ENCODE measurements at regions of chr6 and their contacts with region 1.

Region 1: DNA sequence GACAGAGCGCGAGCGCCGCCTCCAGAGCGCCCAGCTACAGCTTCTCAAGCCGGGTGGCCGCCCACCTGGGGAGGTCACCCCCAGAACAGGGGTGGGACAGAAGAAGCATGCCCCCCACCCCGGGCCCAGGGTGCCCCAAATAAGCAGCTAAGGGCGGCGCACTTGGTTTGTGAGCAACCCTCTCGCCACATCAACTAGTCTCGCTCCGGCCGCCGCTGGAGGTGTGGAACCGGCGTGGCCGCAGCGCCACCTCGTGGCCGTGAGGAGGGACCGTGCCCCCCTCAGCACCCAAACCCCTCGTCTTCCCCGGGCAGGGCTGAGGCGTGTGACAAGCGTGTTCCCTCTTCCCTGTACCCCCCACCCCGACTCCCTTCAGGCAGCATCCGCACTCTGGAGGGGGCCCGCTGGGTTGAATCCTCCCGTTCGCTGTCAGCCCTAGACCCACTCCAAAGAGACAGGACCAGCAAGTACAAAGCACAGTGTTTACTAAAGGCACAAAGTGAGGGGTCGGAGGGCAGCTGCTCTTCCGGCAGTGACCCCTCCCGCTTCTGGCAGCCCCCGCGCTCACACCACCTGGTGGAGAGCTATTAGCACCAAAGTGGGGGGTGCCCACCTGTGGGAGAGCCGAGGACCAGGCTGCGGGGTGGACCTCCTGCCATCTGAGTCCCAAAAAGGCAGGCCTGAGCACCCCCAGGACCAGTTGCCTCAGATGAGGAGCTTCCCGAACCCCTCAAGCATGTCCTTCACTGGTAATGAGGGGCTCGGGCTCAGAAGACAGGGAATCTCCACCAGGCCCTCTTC is 45.4 kb downstream of the MDFI start:
- DNase-seq: peak; percentile 64
- H3K4me3 ChIP-seq: peak overlapping the region in 1 of 3 experiments; percentile 35
- H3K27ac ChIP-seq: no peak overlapping the region
- H3K4me1 ChIP-seq: peaks cover 8% of the 10 kb centered on the region
- H3K27me3 ChIP-seq: no peaks in the 10 kb centered on the region
- CTCF ChIP-seq: peak; percentile 88 to 97
- POLR2A ChIP-seq: no peak

Region 2: GRCh38 chr6:40460380-40460779 is 1223.3 kb before region 1 on chr6:
- CTCF ChIA-PET with region 1: no interaction called
- POLR2A ChIA-PET with region 1: no interaction called
- dilution Hi-C with region 1: no loop called
- intact Hi-C with region 1: no loop called
- DNase-seq: no peak
- H3K4me3 ChIP-seq: no peak overlapping the region
- H3K27ac ChIP-seq: no peak overlapping the region
- H3K4me1 ChIP-seq: no peaks in the 10 kb centered on the region
- H3K27me3 ChIP-seq: no peaks in the 10 kb centered on the region
- CTCF ChIP-seq: no peak
- POLR2A ChIP-seq: no peak

Region 3: DNA sequence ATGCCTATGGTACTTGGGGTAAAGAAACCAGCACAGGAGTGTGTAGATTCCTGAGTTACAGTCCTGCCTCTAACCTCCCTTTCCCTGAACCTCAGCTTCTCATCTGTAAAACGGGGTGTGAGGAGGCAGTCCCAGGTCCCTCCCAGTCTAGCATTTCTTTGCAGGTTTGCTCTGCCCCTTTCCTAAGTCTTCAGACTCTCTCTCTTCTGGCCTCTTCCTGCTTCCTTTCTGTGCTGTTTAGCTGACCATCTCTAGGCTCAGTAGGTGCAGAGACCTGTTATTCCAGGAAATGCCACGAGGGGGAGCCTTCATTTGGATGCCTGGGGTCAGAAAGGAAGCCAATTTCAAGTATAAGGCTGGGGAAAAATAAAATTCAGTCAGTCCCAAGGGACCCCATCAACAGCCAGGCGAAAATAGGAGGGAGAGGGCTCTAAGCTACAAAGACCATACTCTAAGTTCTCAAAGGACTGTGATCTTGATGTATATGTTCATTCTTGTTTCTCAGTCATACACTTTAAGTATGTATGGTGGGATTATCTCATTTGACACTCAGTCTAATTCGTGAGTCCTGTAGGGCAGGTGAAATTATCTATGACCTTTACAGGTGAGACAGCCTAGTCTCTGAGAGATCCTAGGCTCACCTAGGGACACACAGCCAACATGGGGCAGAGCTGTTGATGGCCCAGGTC is 259.2 kb before region 1 on chr6:
- CTCF ChIA-PET with region 1: interaction called, 35 read pairs
- POLR2A ChIA-PET with region 1: interaction called, 3 read pairs
- dilution Hi-C with region 1: no loop called
- intact Hi-C with region 1: loop called (anchors 1 kb)
- DNase-seq: peak; percentile 77
- H3K4me3 ChIP-seq: no peak overlapping the region
- H3K27ac ChIP-seq: no peak overlapping the region
- H3K4me1 ChIP-seq: no peaks in the 10 kb centered on the region
- H3K27me3 ChIP-seq: peaks cover 37 to 46% of the 10 kb centered on the region in 2 experiments
- CTCF ChIP-seq: peak; percentile 70 to 78
- POLR2A ChIP-seq: no peak

Region 4: DNA sequence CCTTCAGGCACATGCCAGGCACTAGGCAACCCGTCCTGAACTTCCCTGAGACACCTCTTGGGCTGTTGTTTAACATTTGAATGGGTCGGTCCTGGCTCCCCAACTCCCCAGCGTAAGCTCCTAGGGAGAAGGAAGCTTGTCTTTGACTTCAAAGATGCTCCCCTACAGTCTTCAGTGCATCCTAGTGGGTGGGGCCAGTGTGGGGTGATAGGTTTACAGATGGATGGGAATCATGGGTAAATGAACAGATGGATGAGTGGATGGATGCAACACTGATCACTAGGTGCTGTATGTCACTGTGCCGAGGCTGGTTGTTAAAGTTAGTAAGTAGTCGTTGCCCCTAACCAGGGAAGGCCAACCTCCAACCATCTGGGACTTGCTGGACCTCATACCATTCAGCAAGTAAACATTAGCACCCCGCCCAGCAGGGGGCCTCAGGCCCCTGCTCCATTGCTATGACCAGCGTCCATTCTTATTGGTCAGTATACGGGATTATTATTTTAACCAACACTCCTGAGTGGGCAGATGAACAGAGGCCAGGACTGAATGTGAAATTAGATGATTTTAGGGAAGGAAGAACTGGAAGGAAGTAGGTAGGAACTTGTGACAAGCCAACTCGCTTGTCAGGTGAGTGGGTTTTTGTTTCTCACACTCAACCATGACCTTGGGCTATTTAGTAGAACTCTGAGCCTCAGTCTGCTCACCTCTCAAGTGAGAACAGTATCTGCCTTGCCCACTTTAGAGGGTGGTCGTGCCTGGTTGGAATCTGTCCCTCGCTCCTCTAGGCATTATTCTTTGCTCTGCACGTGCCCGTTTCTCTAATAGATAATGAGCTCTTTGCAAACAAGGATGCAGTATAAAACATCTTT is 220.4 kb before region 1 on chr6:
- CTCF ChIA-PET with region 1: interaction called, 18 read pairs
- POLR2A ChIA-PET with region 1: no interaction called
- dilution Hi-C with region 1: no loop called
- intact Hi-C with region 1: loop called (anchors 1 kb)
- DNase-seq: peak; percentile 83
- H3K4me3 ChIP-seq: no peak overlapping the region
- H3K27ac ChIP-seq: no peak overlapping the region
- H3K4me1 ChIP-seq: no peaks in the 10 kb centered on the region
- H3K27me3 ChIP-seq: peaks cover 7% of the 10 kb centered on the region in 2 experiments
- CTCF ChIP-seq: peak; percentile 80 to 86
- POLR2A ChIP-seq: no peak

Region 5: GRCh38 chr6:41494212-41495110 is 189.2 kb before region 1 on chr6:
- CTCF ChIA-PET with region 1: no interaction called
- POLR2A ChIA-PET with region 1: no interaction called
- dilution Hi-C with region 1: no loop called
- intact Hi-C with region 1: no loop called
- DNase-seq: no peak
- H3K4me3 ChIP-seq: no peak overlapping the region
- H3K27ac ChIP-seq: no peak overlapping the region
- H3K4me1 ChIP-seq: no peaks in the 10 kb centered on the region
- H3K27me3 ChIP-seq: peaks cover 19 to 26% of the 10 kb centered on the region in 2 experiments
- CTCF ChIP-seq: no peak
- POLR2A ChIP-seq: no peak

Region 6: GRCh38 chr6:41591859-41592502 is 91.7 kb before region 1 on chr6:
- CTCF ChIA-PET with region 1: interaction called, 10 read pairs
- POLR2A ChIA-PET with region 1: no interaction called
- dilution Hi-C with region 1: no loop called
- intact Hi-C with region 1: loop called (anchors 2 kb)
- DNase-seq: peak; percentile 73
- H3K4me3 ChIP-seq: no peak overlapping the region
- H3K27ac ChIP-seq: no peak overlapping the region
- H3K4me1 ChIP-seq: no peaks in the 10 kb centered on the region
- H3K27me3 ChIP-seq: no peaks in the 10 kb centered on the region
- CTCF ChIP-seq: peak; percentile 89 to 93
- POLR2A ChIP-seq: no peak

Region 7: DNA sequence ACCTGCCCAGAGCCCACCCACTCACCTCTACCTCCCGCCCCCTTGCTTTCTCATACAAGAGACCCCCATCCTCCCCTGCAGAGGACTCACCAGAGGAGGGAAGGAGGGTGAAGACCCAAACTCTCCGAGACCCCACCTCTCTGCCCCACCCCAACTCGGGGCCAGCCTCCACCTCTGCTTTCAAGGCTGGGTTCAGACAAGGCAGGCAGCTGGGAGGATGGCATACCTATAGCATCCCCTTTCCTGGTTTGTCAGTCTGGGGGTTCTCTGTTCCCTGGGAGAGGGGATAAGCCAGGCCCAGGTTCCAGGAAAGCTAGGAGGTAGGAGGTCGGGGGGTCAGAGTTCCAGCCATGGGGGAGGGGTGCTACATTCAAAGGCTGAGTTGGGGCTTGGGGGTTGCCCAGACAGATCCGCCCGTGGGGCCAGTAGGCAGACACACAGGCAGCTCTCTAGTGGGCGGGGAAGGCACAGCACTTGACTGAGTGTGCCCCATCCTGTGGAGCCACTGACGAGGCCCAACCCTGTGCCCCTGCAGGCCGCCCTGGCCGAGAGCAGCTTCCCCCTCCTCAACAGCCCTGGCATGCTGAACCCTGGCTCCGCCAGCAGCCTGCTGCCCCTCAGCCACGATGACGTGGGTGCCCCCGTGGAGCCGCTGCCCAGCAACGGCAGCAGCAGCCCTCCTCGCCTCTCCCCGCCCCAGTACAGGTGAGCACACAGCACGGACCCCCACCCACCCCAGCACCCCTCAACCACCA is 86.3 kb before region 1 on chr6:
- CTCF ChIA-PET with region 1: interaction called, 226 read pairs
- POLR2A ChIA-PET with region 1: interaction called, 4 read pairs
- dilution Hi-C with region 1: no loop called
- intact Hi-C with region 1: loop called (anchors 2 kb)
- DNase-seq: no peak
- H3K4me3 ChIP-seq: no peak overlapping the region
- H3K27ac ChIP-seq: no peak overlapping the region
- H3K4me1 ChIP-seq: no peaks in the 10 kb centered on the region
- H3K27me3 ChIP-seq: no peaks in the 10 kb centered on the region
- CTCF ChIP-seq: no peak
- POLR2A ChIP-seq: no peak

Region 8: GRCh38 chr6:41638002-41638934 is 45.4 kb before region 1 on chr6 and contains the start of gene MDFI:
- CTCF ChIA-PET with region 1: interaction called, 5 read pairs
- POLR2A ChIA-PET with region 1: no interaction called
- dilution Hi-C with region 1: no loop called
- intact Hi-C with region 1: loop called (anchors 1 kb)
- DNase-seq: peak; percentile 41
- H3K4me3 ChIP-seq: peak within 1 kb of the TSS; percentile 27 to 66 (median 55)
- H3K27ac ChIP-seq: peak within 1 kb of the TSS; percentile 30
- H3K4me1 ChIP-seq: peaks cover 32% of the 10 kb centered on the region
- H3K27me3 ChIP-seq: no peaks in the 10 kb centered on the region
- CTCF ChIP-seq: no peak
- POLR2A ChIP-seq: no peak
- total RNA-seq, gene MDFI: 32.4 and 45.8 TPM in 2 replicates

Region 9: DNA sequence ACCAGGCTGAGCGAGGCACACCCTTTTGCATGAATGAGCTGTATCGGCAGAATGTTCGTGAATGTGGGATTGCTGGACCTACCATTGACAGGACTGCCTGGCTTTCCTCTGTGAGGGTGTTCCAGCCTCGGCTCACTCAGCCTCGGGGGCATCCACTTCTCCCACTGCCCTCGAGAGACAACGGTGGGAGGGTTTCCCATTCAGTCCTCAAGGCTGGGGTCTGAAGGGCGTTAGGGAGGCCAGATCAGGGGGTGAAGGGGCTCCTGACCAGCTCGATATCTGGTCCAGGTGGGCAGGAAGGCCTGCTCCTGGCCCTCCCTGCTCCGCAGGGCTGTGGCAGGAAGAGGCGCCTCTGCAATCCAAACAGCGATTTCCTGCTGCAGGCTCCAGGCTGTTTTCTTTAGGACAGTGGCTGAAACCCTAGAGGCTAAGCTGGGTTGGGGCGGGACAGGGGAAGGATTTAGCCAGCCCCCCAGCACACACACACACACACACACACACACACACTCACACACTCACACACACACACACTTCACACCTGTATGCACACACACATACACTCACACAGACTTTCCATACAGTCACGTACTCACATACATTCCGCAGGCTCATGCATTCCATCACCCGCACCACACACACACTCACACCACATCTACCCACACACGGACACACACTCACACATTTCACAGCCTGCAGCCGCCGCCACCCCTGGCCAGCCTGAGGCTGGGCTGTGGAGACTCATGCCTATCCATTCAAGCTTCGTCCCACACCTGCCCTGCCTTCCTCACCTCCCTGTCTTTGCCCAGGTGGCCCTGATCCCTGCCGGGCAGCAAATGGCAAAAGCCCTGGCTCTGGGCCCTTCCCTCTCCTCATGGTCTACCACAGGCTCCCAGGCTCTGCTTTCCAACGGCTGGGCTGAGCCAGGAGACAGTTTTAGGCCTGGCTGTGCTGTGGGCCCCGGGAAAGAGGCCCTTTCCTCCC is 27.7 kb before region 1 on chr6:
- CTCF ChIA-PET with region 1: interaction called, 14 read pairs
- POLR2A ChIA-PET with region 1: no interaction called
- dilution Hi-C with region 1: no loop called
- intact Hi-C with region 1: loop called (anchors 1 kb)
- DNase-seq: peak; percentile 73
- H3K4me3 ChIP-seq: no peak overlapping the region
- H3K27ac ChIP-seq: peak overlapping the region; percentile 11
- H3K4me1 ChIP-seq: peaks cover 17% of the 10 kb centered on the region
- H3K27me3 ChIP-seq: no peaks in the 10 kb centered on the region
- CTCF ChIP-seq: no peak
- POLR2A ChIP-seq: peak; percentile 67